Activated naive CD4-positive, alpha-beta T cell treated with anti-CD3 and anti-CD28 coated beads for 36 hours (primary cell): ENCODE measurements at regions of chr2 and their contacts with region 1.

Region 1: GRCh38 chr2:182980115-182980514 is 58.1 kb downstream of the NCKAP1 start:
- DNase-seq: no peak
- H3K4me3 Mint-ChIP-seq: no peak overlapping the region
- H3K27ac Mint-ChIP-seq: no peak overlapping the region
- H3K4me1 Mint-ChIP-seq: no peaks in the 10 kb centered on the region
- H3K27me3 Mint-ChIP-seq: no peaks in the 10 kb centered on the region

Region 2: GRCh38 chr2:182186132-182186735 is 793.9 kb before region 1 on chr2:
- CTCF ChIA-PET with region 1: interaction called, 21 read pairs
- intact Hi-C with region 1: loop called (anchors 1 kb)
- DNase-seq: no peak
- H3K4me3 Mint-ChIP-seq: no peak overlapping the region
- H3K27ac Mint-ChIP-seq: no peak overlapping the region
- H3K4me1 Mint-ChIP-seq: no peaks in the 10 kb centered on the region
- H3K27me3 Mint-ChIP-seq: peaks cover 9% of the 10 kb centered on the region

Region 3: GRCh38 chr2:182666674-182667314 is 313.3 kb before region 1 on chr2:
- CTCF ChIA-PET with region 1: interaction called, 33 read pairs
- intact Hi-C with region 1: loop called (anchors 1 kb)
- DNase-seq: peak; percentile 19
- H3K4me3 Mint-ChIP-seq: no peak overlapping the region
- H3K27ac Mint-ChIP-seq: no peak overlapping the region
- H3K4me1 Mint-ChIP-seq: peaks cover 8% of the 10 kb centered on the region
- H3K27me3 Mint-ChIP-seq: no peaks in the 10 kb centered on the region

Region 4: GRCh38 chr2:182763311-182763912 is 216.7 kb before region 1 on chr2:
- CTCF ChIA-PET with region 1: interaction called, 14 read pairs
- intact Hi-C with region 1: loop called (anchors 1 kb)
- DNase-seq: no peak
- H3K4me3 Mint-ChIP-seq: no peak overlapping the region
- H3K27ac Mint-ChIP-seq: no peak overlapping the region
- H3K4me1 Mint-ChIP-seq: no peaks in the 10 kb centered on the region
- H3K27me3 Mint-ChIP-seq: no peaks in the 10 kb centered on the region

Region 5: DNA sequence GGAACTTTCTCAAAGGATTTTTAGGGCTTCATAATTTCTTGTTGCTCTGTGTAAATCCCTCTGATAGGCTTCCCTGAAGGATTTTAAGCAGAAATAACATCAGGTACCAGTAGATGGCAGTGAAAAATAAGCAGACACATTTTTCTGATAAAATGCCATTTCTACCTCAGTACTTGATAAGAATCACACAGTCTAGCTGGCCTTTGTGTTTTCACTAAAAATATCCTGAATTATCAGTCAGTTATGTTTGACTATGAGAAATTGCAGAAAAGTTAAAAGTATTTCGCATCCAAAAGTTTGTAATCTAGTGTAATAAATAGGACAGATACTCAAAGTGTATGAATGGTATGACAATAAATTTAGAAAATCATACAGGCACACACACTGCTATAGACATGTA is 195.3 kb before region 1 on chr2:
- CTCF ChIA-PET with region 1: interaction called, 6 read pairs
- intact Hi-C with region 1: loop called (anchors 1 kb)
- DNase-seq: no peak
- H3K4me3 Mint-ChIP-seq: no peak overlapping the region
- H3K27ac Mint-ChIP-seq: no peak overlapping the region
- H3K4me1 Mint-ChIP-seq: no peaks in the 10 kb centered on the region
- H3K27me3 Mint-ChIP-seq: no peaks in the 10 kb centered on the region

Region 6: DNA sequence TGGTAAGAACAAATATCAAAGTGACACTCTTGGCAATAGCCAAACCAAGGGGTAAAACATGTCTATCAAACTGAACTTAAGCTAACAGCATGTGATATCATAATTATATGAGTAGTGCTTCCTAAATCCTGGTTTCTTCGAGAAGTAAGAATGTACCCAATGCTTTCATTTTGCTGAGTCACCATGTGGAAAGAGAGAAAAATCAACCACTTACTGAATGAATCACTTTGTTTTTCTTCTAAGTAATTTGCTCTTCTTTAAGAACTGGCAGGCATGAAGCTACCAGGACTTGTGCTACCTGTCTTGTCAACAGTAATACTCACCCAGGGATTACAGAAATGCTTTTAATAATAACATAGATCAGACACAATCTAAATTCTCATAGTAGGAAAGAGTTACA is 79.4 kb after region 1 on chr2:
- CTCF ChIA-PET with region 1: no interaction called
- intact Hi-C with region 1: no loop called
- DNase-seq: no peak
- H3K4me3 Mint-ChIP-seq: no peak overlapping the region
- H3K27ac Mint-ChIP-seq: no peak overlapping the region
- H3K4me1 Mint-ChIP-seq: peaks cover 3% of the 10 kb centered on the region
- H3K27me3 Mint-ChIP-seq: peaks cover 14% of the 10 kb centered on the region